Left colon (tissue), 2 donors: ENCODE measurements at regions of chr3 and their contacts with region 1.

Region 1: GRCh38 chr3:64533617-64534317 is 154.0 kb downstream of the ADAMTS9 start:
- DNase-seq: peak; percentile 75
- ATAC-seq: peak; percentile 98

Region 2: DNA sequence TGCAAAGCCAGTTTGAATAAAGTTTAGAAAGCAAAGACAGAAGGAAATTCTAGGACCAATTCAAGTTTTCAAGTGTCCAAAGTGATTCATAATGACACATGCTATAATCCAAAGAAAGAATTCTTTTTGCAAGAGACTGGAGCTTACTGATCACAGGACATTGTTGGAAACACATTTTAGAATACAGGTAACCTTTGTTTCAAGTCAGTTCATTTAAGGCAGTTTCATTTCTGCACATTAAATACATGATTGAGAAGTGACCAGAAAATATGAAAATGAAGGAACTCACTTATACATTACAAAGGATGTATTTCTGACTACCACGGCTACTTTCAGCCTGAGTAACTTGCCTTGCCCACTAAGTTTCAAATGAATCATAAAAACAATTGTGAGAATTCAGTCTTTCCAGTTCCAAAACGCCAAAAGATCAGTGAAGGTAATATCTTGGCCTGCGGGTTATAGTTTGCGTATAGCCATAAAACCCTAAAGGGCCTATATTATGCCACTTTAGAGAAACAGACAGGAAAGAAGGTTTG is 357.2 kb before region 1 on chr3:
- intact Hi-C with region 1: no loop called
- DNase-seq: no peak
- ATAC-seq: peak; percentile 46

Region 3: DNA sequence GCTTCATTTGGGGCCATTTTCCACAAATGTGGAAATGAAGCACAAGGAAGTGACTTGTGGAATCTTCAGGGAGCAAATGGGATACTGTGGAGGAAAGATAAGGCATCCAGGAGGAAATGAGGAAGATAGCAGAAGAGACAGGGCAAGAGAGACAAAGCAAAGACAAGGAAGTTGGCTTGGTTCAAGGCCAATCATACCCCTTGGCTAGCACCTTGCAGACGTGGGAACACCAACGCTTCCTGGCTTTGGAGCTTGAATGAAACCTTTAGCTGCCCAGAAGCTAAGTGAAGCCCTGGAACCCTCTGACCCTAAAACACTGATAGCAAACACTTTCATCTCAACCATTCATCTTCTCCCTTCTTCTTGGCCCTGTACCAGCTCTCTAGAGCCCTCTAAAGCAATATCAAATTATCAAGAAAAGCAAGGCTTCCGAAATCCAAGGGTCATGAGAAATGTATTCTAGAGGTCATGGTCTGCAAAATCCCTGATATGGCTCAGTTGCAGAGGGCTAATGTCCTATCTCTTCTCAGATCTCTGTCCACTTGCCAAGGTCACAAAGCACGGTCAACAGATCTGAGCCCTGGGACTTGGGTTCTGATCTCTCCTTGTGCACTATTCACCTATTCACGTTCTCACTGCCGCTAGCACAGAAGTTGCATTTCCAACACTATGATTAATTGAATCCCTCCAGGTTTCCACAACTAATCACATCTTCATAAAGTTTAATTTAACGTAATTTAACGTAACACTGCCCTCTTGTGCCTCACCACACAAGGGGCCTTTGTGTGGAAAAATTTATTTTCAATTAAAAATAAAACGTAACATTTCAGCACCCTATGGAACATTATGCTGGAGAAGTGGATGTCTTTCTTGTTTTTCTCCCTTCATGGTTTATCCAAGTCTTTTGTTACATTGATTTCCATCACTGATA is 711.6 kb after region 1 on chr3:
- intact Hi-C with region 1: loop called in 1 of 2 experiments (anchors 5 kb)
- DNase-seq: no peak
- ATAC-seq: no peak

Region 4: GRCh38 chr3:65412588-65412987 is 878.8 kb after region 1 on chr3:
- intact Hi-C with region 1: loop called in 1 of 2 experiments (anchors 10 kb)
- DNase-seq: peak; percentile 81 to 92
- ATAC-seq: peak; percentile 98